Adrenal gland (tissue), 19 donors: ENCODE measurements at regions of chr12 and their contacts with region 1.

Region 1: DNA sequence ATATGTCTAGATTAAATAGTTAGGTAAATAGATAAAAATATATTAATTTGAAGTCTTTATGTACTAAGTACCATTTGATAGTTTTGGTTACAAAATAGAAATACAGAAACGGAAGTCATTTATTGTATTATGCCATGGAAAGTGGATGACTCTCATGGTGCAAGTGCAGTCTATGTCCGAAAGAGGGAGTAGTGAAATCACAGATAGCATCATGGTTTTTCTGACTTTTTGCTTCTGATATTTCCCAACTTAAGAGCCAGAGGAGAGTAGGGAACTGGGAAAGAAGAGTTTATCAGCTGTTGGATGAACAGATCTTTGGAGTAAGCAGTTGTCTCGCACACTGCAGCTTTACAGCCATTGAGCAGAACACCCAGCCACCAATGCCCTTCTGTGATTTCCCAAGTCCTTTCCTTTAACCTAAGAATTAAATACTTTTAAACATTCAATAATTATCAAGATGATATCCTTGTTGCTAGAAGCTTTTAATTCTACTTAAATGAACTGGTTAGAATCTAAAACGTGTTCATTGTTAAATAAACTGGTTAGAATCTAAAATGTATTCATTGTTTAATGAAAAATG is 18.4 kb upstream of the SRGAP1 start:
- DNase-seq: peak in 3 of 7 donors; percentile 27 to 34 (median 34)
- H3K4me3 ChIP-seq: no peak overlapping the region
- H3K27ac ChIP-seq: no peak overlapping the region
- H3K4me1 ChIP-seq: no peaks in the 10 kb centered on the region
- H3K27me3 ChIP-seq: no peaks in the 10 kb centered on the region
- CTCF ChIP-seq: peak; percentile 64 to 94 (median 80)
- POLR2A ChIP-seq: no peak

Region 2: DNA sequence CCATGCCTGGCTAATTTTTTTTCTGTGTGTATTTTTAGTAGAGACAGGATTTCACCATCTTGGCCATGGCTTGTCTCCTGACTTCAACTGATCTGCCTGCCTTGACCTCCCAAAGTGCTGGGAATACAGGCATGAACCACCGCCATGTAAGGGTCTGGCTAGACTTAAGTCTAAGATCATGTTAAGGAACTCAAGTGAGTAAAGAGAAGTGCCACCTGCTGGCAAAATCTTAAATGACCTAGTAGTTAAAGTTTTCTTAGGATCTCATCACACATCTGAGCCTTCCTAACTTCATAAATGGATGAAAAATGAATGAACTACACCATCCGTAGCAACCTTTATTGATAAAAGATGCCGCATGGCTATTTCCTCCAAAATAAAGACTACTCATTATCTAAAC is 566.1 kb after region 1 on chr12:
- intact Hi-C with region 1: loop called in 1 of 2 experiments (anchors 10 kb)
- DNase-seq: peak in 1 of 7 donors; percentile 37
- H3K4me3 ChIP-seq: no peak overlapping the region
- H3K27ac ChIP-seq: no peak overlapping the region
- H3K4me1 ChIP-seq: peaks cover 0 to 8% of the 10 kb centered on the region in 2 donors
- H3K27me3 ChIP-seq: peaks cover 7% of the 10 kb centered on the region
- CTCF ChIP-seq: peak; percentile 12 to 32 (median 20)
- POLR2A ChIP-seq: no peak